PC-9 (cell line): ENCODE measurements at regions of chr11 and their contacts with region 1.

Region 1: DNA sequence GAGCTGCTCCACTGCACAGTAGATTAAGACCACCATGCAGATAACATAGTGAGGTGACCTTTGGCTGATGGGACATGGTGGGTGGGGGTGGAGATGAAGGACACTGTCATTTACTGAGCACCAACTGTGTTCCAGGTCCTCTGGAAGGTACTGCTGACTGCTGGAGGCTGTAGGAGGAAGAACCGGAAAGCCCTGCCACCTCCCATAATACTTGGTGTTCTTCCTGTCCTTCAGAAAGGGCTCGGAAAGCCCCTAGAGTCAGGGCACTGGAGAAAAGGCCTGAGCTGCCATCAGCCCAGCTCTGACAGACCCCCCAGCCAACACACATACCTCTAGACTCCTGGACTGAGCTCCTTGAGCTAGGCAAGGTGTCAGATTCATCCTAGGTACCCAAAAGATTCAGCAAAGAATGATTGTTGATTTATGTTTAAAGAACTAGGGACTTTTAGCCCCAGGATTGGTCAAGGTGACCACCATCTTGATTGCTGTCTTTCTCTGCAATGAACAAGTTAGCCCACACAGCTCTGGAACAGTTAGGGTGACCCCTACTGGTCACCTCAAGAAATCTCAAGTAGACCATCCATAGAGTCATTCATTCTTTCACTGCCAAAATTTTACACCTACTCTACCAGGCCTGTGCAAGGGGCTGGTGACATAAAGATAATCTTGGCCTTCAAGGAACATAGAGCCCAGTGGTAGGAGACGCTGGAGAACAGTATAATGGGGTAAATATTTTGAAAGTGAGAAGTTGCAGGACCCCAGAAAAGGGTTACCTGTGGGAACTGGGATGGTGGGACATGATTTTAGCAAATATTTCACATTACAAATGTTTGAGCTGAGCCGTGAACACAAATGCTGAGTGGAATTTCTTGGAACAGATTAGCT is 39.4 kb downstream of the IRAG1 start:
- DNase-seq: no peak
- H3K4me3 ChIP-seq: no peak overlapping the region
- H3K27ac ChIP-seq: peak overlapping the region; percentile 62; the same call in 1 of the 2 replicates
- H3K4me1 ChIP-seq: peaks cover 42% of the 10 kb centered on the region
- H3K27me3 ChIP-seq: no peaks in the 10 kb centered on the region
- CTCF ChIP-seq: peak; percentile 67

Region 2: DNA sequence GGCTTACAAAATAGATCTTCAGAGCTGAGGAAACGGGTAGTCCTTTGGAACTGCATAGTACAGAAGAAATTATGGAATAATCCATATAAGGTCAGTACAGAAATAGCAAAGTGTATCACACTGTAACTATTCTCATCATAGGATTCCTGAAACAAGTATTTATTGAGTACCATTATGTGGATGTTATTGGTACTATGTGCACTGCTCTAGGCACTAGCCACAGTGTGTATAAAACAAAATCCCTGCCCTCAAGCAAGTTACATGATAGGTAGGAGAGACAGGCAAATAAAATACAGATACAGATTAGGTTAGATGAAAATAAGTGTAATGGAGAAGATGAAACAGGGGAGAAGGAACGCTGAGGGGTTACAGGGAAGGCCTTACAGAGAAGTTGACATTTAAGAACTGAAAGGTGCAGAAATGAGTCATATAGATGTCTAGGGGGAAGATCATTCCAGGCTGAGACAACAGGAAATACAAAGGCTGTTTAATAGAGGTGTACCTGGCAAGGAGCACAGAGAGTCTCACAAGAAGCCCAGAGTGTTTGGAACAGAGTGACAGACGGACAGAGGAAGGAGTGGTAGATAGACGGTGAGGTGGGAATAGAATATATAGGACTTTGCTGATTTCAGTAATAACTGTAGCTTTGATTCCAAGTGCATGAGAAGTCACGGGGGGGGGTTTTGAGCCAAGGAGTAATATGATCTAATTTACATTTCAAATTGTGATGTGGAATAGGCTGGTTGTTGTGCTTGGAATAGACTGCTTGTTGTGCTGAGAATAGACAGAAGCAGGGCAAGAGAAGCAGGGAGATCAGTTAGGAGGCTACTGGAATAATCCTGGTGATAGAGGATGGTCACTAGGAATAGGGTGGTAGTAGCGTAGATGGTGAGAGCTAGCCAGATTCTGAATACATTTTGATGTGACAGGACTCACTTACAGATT is 126.9 kb before region 1 on chr11:
- CTCF ChIA-PET with region 1: no interaction called
- POLR2A ChIA-PET with region 1: no interaction called
- intact Hi-C with region 1: loop called (anchors 10 kb)
- DNase-seq: peak in 1 of 2 experiments; percentile 63
- H3K4me3 ChIP-seq: no peak overlapping the region
- H3K27ac ChIP-seq: peak overlapping the region; percentile 15; the same call in 1 of the 2 replicates
- H3K4me1 ChIP-seq: peaks cover 26% of the 10 kb centered on the region
- H3K27me3 ChIP-seq: no peaks in the 10 kb centered on the region
- CTCF ChIP-seq: no peak

Region 3: DNA sequence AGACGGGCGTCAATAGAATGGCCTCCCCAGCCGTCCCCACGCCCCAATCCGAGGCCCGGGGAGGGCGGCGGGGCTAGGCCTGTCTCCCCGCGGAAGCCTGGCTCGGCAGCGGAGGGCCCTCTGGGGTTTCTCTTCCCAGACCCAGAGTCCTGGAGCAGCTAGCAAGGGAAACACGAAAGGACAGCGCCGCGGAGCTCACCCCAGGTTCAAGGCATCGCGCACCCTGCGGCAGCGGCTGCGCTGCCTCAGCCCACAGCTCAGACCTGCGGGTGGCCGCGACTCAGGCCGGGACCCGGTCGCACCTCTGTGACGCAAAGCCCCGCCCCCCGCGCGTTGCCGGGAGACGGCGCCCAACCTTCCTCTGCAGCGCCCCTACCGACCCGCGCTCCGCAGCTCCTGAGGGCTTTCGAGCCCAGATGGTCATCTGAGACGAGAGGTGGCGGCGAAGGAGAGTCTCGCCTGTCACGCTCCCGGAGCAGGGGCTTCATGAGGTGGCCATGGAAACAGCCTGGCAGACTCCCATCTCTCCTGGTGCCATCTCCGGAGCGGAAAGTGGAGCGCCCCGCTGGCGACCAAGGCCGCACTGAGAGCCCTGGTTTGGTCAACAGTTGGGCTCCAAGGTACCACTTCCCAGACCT is 113.1 kb before region 1 on chr11 and contains the start of gene RNF141:
- CTCF ChIA-PET with region 1: no interaction called
- POLR2A ChIA-PET with region 1: no interaction called
- intact Hi-C with region 1: loop called (anchors 5 kb)
- DNase-seq: peak; percentile 74 to 93
- H3K4me3 ChIP-seq: peak within 1 kb of the TSS; percentile 89
- H3K27ac ChIP-seq: peak within 1 kb of the TSS; percentile 69
- H3K4me1 ChIP-seq: peaks cover 21% of the 10 kb centered on the region
- H3K27me3 ChIP-seq: no peaks in the 10 kb centered on the region
- CTCF ChIP-seq: peak; percentile 59; the same call in 1 of the 2 replicates
- total RNA-seq, gene RNF141: 33.7 and 36.8 TPM in 2 replicates

Region 4: GRCh38 chr11:10693509-10694081 is 39.4 kb after region 1 on chr11 and contains the start of gene IRAG1:
- CTCF ChIA-PET with region 1: no interaction called
- POLR2A ChIA-PET with region 1: no interaction called
- intact Hi-C with region 1: no loop called
- DNase-seq: no peak
- H3K4me3 ChIP-seq: no peak within 1 kb of the TSS
- H3K27ac ChIP-seq: no peak within 1 kb of the TSS
- H3K4me1 ChIP-seq: no peaks in the 10 kb centered on the region
- H3K27me3 ChIP-seq: no peaks in the 10 kb centered on the region
- CTCF ChIP-seq: no peak
- total RNA-seq, gene IRAG1: 0.65 and 1.3 TPM in 2 replicates

Region 5: DNA sequence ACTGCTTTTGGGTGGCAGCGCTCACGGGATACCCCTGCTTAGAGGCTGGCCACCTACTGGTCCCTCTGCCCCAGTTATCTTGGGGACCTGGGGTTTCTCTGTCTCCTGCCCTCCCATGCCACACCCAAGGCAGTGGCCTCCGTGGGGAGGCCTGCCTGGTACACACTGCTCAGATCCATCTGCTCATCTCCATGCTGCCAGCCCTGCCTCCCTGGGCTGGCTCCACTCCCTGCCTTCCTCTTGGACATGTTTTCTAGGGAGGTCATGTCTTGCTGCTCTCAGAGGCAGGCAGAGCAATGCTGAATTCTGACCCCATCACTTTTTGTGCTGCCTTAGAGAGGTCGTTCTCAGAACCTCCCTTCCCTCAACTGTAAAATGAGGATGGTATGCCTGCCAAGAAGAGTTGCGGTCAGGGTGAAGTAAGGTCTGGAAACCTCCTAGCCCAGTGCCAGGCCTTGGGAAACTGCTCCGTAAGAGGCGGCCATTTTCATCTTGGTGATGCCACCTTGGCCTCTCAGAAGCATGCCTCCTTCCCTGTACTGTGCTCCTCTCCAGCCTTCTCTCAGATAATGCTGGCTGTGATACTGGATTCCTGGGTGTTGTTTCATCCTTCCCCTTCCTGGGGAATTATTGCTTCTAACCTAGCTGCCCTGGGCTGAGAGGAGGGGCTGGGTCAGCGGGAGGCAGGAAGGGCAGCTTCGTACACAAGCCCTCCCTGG is 390.1 kb after region 1 on chr11:
- CTCF ChIA-PET with region 1: no interaction called
- POLR2A ChIA-PET with region 1: no interaction called
- intact Hi-C with region 1: no loop called
- DNase-seq: no peak
- H3K4me3 ChIP-seq: no peak overlapping the region
- H3K27ac ChIP-seq: no peak overlapping the region
- H3K4me1 ChIP-seq: no peaks in the 10 kb centered on the region
- H3K27me3 ChIP-seq: no peaks in the 10 kb centered on the region; the same call in 1 of the 2 replicates
- CTCF ChIP-seq: no peak